H1 (cell line): ENCODE measurements at regions of chr19 and their contacts with region 1.

Region 1: DNA sequence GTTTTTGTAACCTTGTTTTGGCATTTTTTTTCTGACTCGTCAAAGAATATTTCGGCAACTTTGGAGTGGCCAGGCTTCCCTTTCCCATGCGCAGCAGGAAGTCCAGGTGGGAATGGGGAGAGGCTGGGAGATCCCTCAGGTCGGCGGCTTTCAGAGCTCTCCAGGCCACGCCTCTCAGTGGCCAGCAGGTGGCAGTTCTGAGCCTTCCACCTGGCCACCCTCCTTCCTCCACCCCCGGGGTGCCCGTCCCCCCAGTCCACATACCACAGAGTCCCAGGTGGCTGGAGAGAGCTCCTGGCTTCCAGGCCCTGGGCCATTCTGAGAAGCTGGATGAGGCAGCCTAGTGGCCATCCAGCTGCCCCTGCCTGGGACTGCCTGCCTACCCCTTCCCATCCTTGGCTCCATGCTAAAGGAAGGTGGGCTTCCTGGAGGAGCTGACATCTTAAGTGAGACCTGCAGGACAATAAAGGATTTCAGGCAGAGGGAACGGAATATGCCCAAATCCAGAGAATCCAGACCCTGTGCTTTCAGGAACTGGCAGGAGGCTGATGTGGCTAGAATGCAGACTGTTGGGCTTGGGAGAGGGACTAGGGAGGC is 46.3 kb downstream of the CCNE1 start:
- DNase-seq: peak in 1 of 2 experiments; percentile 82
- H3K4me3 ChIP-seq: no peak overlapping the region
- H3K27ac ChIP-seq: no peak overlapping the region
- H3K4me1 ChIP-seq: peaks cover 0 to 9% (median 7%) of the 10 kb centered on the region in 4 experiments; a peak in 6 of 7 replicates
- H3K27me3 ChIP-seq: no peaks in the 10 kb centered on the region
- CTCF ChIP-seq: peak; percentile 62 to 87 (median 84)
- EP300 ChIP-seq: no peak
- POLR2A ChIP-seq: no peak
- RAD21 ChIP-seq: peak; percentile 48 to 62

Region 2: GRCh38 chr19:29704562-29705558 is 153.2 kb before region 1 on chr19:
- CTCF ChIA-PET with region 1: no interaction called
- POLR2A ChIA-PET with region 1: no interaction called
- DNase-seq: no peak
- H3K4me3 ChIP-seq: no peak overlapping the region
- H3K27ac ChIP-seq: no peak overlapping the region
- H3K4me1 ChIP-seq: no peaks in the 10 kb centered on the region; a peak in 1 of 7 replicates
- H3K27me3 ChIP-seq: no peaks in the 10 kb centered on the region
- CTCF ChIP-seq: no peak
- EP300 ChIP-seq: no peak
- POLR2A ChIP-seq: no peak
- RAD21 ChIP-seq: no peak

Region 3: DNA sequence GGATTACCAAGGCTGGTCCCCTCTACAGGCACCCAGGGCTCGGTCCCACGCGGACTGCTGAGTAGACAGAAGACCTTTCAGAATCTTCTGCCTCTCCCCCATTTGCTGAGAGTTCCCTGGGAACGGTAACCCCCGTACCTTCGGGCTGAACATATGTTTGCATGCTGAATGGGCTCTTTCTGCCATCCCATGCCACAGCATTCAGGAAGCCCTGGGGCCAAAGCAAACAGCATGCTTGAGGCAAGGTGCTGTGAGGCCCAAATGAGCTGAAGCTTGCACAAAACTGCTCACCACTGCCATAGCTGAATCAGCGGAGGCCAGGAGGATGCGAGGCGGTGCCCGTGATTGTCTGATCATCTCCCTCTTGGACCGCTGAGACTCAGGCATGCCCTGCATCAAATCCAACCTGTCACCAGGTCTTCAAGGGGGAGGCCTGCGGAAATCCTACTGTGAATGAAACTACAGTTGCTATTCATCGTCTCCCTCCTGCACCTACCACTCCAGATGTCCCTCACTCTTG is 126.7 kb before region 1 on chr19:
- CTCF ChIA-PET with region 1: interaction called, 16 read pairs
- POLR2A ChIA-PET with region 1: no interaction called
- DNase-seq: no peak
- H3K4me3 ChIP-seq: no peak overlapping the region
- H3K27ac ChIP-seq: no peak overlapping the region
- H3K4me1 ChIP-seq: no peaks in the 10 kb centered on the region
- H3K27me3 ChIP-seq: no peaks in the 10 kb centered on the region
- CTCF ChIP-seq: no peak
- EP300 ChIP-seq: no peak
- POLR2A ChIP-seq: no peak
- RAD21 ChIP-seq: no peak

Region 4: GRCh38 chr19:29785955-29786589 is 72.0 kb before region 1 on chr19:
- CTCF ChIA-PET with region 1: interaction called, 12 read pairs
- POLR2A ChIA-PET with region 1: no interaction called
- DNase-seq: peak in 1 of 2 experiments; percentile 77
- H3K4me3 ChIP-seq: no peak overlapping the region
- H3K27ac ChIP-seq: no peak overlapping the region
- H3K4me1 ChIP-seq: no peaks in the 10 kb centered on the region
- H3K27me3 ChIP-seq: no peaks in the 10 kb centered on the region
- CTCF ChIP-seq: peak; percentile 72 to 86 (median 85)
- EP300 ChIP-seq: no peak
- POLR2A ChIP-seq: no peak
- RAD21 ChIP-seq: peak; percentile 74 to 80

Region 5: GRCh38 chr19:29878973-29879654 is 21.0 kb after region 1 on chr19:
- CTCF ChIA-PET with region 1: interaction called, 134 read pairs
- POLR2A ChIA-PET with region 1: no interaction called
- DNase-seq: no peak
- H3K4me3 ChIP-seq: no peak overlapping the region
- H3K27ac ChIP-seq: no peak overlapping the region
- H3K4me1 ChIP-seq: peaks cover 0 to 8% (median 1%) of the 10 kb centered on the region in 4 experiments; a peak in 3 of 7 replicates
- H3K27me3 ChIP-seq: no peaks in the 10 kb centered on the region
- CTCF ChIP-seq: no peak
- EP300 ChIP-seq: no peak
- POLR2A ChIP-seq: no peak
- RAD21 ChIP-seq: no peak